ENCODE measurements at regions of chr9 and their contacts with region 1.

Region 1: DNA sequence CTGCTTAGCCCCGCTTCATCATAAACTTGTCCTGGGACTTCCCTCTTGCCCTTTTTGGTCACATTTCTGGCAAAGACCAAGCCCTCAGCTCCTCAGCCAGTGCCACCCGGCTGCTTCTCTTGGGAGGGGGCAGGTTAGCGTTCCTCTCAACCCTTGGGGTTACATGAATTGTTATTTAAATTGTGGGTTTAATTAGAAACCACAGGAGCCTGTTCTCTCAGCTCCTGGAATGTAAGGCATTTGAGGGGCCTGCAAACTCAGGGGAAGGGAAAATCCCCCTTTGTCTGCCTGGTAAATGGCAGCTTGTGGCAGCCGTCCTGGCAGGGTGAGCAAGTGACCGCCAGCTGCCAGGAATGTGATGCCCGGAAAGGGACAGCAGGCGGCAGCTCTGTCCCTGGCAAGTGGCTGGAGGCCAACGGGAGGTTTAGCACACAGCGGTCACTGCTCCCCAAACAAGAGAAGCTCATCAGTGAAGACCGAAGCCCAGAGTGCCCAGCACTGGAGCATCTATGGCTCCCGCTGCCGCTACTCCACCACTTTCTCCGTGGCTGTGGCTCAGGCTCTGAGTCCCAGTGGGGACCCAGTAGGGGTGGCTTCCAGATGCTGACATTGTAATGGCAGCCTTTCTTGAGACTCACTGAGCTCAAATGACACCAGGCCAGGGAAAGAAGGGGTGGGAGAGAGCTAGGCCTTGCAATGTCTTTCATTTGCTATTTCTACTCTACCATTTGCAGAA is 51.7 kb downstream of the SHB start:
- DNase-seq: peak in 1 of 2 donors; percentile 83
- H3K4me3 ChIP-seq: peak overlapping the region in 1 of 2 donors; percentile 41
- H3K27ac ChIP-seq: peak overlapping the region; percentile 58
- H3K4me1 ChIP-seq: peaks cover 29 to 42% of the 10 kb centered on the region in 2 donors
- H3K27me3 ChIP-seq: no peaks in the 10 kb centered on the region
- CTCF ChIP-seq: peak; percentile 50 to 55 (median 52)

Region 2: DNA sequence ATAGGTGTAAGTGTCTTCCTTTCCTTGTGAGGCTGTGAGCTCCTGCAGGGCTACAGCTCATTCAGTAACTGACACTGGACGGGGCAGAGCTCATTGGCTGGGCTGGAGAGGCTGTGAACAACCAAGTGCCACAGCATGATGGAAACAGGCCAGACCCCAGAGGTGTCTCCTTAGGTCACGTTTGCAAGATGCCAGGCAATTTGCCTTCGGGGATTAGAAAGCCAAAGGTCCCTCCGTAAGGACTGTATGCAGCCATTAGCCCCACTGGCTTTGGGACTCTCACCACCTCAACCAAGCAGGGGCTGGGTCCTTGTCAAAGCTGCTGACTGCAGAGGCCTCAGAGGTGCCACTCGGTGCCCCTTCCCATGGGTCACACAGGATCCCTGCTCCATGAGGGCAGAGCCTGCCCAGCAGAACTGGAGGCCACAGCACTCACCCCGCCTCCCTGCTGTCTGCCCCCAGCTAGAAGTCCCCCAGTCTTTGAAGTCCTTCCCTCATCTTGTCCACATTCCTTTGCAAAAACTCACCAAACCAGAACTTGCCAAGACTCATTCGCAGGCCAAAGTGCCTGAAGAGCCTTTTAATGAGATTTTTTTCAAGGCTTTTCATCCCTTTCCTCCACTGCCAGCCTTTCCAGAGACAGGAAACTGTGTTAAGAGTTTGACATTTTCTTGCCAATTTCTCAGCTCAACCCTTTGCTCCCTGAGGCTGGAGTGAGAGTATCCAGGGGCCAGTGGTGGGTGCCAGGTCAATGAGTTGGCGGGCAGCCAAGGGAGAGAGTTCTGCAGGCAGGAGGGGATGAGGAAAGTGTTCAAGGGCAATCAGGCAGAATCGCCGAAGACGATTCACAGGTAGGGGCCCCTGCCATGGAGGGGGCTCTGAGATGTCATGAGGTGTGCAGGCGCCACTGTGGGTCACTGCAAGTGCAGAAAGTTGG is 73.7 kb before region 1 on chr9:
- intact Hi-C with region 1: loop called (anchors 2 kb)
- DNase-seq: peak in 1 of 2 donors; percentile 85
- H3K4me3 ChIP-seq: no peak overlapping the region
- H3K27ac ChIP-seq: peak overlapping the region; percentile 65 to 79
- H3K4me1 ChIP-seq: peaks cover 25 to 42% of the 10 kb centered on the region in 2 donors
- H3K27me3 ChIP-seq: no peaks in the 10 kb centered on the region
- CTCF ChIP-seq: no peak

Region 3: DNA sequence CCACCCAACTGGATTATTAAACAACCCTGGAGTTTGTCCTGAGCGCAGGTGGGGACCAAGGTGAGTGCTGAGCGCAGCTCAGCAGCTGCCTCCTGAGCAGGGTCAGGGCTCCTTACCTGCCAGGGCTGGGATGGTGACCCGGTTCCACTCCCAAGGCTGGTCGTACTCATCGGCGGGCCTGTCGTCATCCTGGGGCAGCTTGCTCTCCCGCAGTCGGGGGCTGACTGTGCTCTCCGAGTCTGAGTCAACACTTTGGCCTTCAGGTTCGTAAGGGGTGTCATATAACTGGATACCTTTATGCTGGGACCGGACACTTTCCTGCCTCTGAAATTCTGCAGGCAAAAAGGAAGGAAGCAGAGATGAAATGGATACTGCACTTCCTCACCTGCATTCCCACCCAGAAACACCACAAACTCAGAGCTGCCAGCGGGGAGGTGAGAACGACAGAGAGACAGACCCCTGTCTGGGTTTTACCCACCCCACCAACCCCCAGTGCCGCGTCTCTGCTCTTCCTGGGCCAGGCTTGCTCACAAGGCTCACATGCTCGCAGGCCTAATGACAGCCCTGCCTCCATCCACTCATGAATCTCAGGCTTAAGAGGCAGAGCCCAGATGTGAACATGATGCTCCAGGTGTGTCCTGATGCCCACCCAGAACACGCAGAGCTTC is 42.7 kb before region 1 on chr9:
- intact Hi-C with region 1: no loop called
- DNase-seq: no peak
- H3K4me3 ChIP-seq: no peak overlapping the region
- H3K27ac ChIP-seq: no peak overlapping the region
- H3K4me1 ChIP-seq: peaks cover 0 to 12% of the 10 kb centered on the region in 2 donors
- H3K27me3 ChIP-seq: no peaks in the 10 kb centered on the region
- CTCF ChIP-seq: no peak

Region 4: DNA sequence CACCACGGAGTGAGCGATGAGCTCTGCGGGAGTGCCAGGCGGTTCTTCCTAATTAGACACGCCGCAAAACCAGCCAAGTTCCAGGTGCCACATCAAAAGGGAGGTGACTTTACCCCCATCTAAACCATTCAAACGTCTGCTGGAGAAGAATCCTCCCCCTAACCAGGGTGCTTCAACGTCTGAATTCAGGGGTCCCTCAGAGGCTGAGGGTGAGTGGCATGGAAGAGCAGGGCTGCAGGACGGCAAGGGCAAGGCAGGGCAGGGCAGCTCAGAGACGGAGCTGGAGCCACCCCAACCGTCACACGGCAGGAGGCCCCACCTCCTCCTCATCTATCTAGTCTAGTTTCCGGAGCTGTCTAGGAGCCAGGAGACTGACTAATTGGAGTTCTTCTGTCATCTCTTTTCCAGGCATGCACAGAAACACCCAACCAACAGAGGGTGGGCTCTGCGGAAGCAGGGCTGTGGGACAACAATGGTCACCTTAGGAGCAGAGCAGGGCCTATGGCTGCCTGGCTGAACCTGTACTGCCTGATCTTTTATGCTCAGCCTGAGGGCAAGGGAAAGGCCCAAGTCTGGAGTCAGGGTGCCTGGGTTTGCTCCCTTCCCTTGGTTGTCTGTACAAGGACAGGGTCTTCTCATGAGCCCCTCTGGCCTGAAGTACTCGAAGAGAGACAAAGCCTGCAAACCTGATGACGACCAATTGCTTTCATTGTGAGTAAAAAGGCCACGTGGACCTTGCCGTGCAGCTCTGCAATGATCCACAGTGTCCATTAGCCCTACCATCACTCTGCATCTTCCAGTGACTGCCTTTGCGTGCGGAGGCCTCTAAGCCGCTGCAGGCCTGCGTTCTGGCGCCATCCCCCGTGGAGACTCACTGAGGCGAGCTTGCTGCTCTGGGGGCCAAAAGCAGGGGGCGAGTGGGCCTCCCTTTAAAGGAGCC is 32.4 kb before region 1 on chr9:
- intact Hi-C with region 1: no loop called
- DNase-seq: no peak
- H3K4me3 ChIP-seq: no peak overlapping the region
- H3K27ac ChIP-seq: no peak overlapping the region
- H3K4me1 ChIP-seq: no peaks in the 10 kb centered on the region
- H3K27me3 ChIP-seq: no peaks in the 10 kb centered on the region
- CTCF ChIP-seq: no peak

Region 5: DNA sequence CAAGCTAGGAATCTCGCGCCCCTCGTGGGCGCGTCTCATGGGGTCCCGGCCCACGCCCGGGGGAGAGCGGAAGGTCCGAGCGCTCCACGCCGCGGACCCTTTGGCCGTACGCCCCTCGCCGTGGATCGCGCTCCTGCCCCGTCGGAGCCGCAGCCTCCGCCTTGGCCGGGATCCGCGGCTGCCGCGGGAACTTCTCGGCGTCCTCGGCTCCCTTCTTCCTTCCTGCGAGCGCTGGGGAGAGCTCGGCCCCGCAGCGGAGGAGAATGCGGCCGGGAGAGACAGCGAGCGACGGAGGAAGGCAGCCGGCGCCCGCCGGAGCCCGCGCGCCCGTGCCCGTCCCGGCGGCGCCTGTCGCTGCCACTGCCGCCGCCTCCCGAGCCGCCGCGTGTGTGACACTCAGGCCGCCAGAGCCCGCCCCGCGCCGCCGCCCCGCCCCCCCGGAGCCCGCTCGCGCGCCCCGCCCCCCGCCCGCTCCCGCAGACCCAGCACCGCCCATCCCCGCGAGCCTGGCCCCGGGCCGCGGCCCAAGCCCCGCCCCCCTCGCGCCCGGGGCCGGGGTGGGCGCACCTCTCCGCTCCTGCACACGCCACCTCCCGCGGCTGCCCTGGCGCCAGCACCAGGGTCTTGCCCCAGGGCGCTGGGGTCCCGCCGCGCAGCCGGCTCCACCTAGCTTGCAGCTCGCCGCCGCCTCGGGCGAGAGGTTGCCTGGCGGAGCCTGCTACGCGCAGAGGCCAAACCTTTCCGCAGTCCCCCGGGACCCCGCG is 51.7 kb after region 1 on chr9 and contains the start of gene SHB:
- intact Hi-C with region 1: loop called (anchors 1 kb)
- DNase-seq: peak in 1 of 2 donors; percentile 87
- H3K4me3 ChIP-seq: peak within 1 kb of the TSS; percentile 87 to 97
- H3K27ac ChIP-seq: peak within 1 kb of the TSS; percentile 90 to 99
- H3K4me1 ChIP-seq: peaks cover 3 to 14% of the 10 kb centered on the region in 2 donors
- H3K27me3 ChIP-seq: no peaks in the 10 kb centered on the region
- CTCF ChIP-seq: peak in 2 of 3 experiments; percentile 15 to 37
- total RNA-seq, gene SHB: 77.8 TPM